ENCODE measurements at regions of chr12 and their contacts with region 1.

Region 1: GRCh38 chr12:93243689-93244513 is 133.8 kb upstream of the NUDT4 start:
- DNase-seq: peak in 6 of 9 donors; percentile 20 to 60 (median 40)
- ATAC-seq: peak; percentile 68
- H3K4me3 ChIP-seq: no peak overlapping the region
- H3K4me3 Mint-ChIP-seq: peak overlapping the region; percentile 12 to 79 (median 70)
- H3K27ac ChIP-seq: peak overlapping the region; percentile 46
- H3K27ac Mint-ChIP-seq: peak overlapping the region in 8 of 9 donors; percentile 75 to 91 (median 88)
- H3K4me1 ChIP-seq: peaks cover 11 to 23% of the 10 kb centered on the region in 2 donors
- H3K4me1 Mint-ChIP-seq: peaks cover 27 to 65% (median 56%) of the 10 kb centered on the region in 7 donors
- H3K27me3 ChIP-seq: no peaks in the 10 kb centered on the region
- H3K27me3 Mint-ChIP-seq: no peaks in the 10 kb centered on the region

Region 2: DNA sequence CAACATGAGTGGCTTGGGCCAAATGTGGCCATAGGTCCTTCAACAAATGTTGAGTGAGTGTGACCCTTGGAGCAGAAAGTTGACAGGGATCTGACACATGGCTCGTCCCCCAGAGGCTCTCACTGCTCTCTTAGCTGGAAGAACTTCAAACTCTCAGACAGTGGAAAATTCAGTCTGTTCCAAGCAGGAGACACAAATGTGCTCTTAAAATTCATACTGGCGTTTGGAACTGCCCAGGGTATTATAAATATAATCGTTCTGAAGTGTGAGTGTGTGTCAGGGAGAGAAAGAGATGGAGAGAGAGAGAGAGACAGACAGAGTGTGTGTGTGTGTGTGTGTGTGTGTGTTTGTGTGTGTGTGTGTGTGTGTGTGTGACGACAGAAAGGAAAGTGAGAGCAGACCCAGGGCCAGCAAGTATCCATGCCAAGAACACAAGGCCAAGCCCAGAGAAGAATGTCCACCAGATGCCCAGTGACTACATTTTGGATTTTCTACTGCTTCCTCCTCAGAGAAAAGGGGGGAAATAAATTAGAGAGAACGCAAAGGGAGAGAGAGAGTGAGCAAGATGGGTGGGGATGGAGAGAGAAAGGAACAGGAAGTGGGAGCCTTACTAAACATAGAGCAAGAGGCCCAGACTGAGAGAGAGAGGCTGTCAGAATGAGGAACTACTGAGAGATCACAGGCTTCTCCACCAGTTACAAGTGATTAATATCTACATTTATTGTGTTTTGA is 59.8 kb before region 1 on chr12:
- CTCF ChIA-PET with region 1: no interaction called
- POLR2A ChIA-PET with region 1: interaction called, 3 read pairs
- intact Hi-C with region 1: loop called (anchors 5 kb)
- DNase-seq: peak in 5 of 9 donors; percentile 19 to 42 (median 21)
- ATAC-seq: peak; percentile 86
- H3K4me3 ChIP-seq: no peak overlapping the region
- H3K4me3 Mint-ChIP-seq: peak overlapping the region in 9 of 10 donors; percentile 12 to 76 (median 57)
- H3K27ac ChIP-seq: no peak overlapping the region
- H3K27ac Mint-ChIP-seq: peak overlapping the region; percentile 4 to 89 (median 71)
- H3K4me1 ChIP-seq: no peaks in the 10 kb centered on the region
- H3K4me1 Mint-ChIP-seq: peaks cover 10 to 39% (median 21%) of the 10 kb centered on the region in 7 donors
- H3K27me3 ChIP-seq: no peaks in the 10 kb centered on the region
- H3K27me3 Mint-ChIP-seq: no peaks in the 10 kb centered on the region

Region 3: GRCh38 chr12:93223440-93224426 is 20.2 kb before region 1 on chr12:
- CTCF ChIA-PET with region 1: no interaction called
- POLR2A ChIA-PET with region 1: no interaction called
- intact Hi-C with region 1: no loop called
- DNase-seq: no peak
- ATAC-seq: no peak
- H3K4me3 ChIP-seq: no peak overlapping the region
- H3K4me3 Mint-ChIP-seq: no peak overlapping the region
- H3K27ac ChIP-seq: no peak overlapping the region
- H3K27ac Mint-ChIP-seq: no peak overlapping the region
- H3K4me1 ChIP-seq: no peaks in the 10 kb centered on the region
- H3K4me1 Mint-ChIP-seq: peaks cover 0 to 3% (median 0%) of the 10 kb centered on the region in 7 donors
- H3K27me3 ChIP-seq: no peaks in the 10 kb centered on the region
- H3K27me3 Mint-ChIP-seq: peaks cover 0 to 8% (median 2%) of the 10 kb centered on the region in 5 donors

Region 4: DNA sequence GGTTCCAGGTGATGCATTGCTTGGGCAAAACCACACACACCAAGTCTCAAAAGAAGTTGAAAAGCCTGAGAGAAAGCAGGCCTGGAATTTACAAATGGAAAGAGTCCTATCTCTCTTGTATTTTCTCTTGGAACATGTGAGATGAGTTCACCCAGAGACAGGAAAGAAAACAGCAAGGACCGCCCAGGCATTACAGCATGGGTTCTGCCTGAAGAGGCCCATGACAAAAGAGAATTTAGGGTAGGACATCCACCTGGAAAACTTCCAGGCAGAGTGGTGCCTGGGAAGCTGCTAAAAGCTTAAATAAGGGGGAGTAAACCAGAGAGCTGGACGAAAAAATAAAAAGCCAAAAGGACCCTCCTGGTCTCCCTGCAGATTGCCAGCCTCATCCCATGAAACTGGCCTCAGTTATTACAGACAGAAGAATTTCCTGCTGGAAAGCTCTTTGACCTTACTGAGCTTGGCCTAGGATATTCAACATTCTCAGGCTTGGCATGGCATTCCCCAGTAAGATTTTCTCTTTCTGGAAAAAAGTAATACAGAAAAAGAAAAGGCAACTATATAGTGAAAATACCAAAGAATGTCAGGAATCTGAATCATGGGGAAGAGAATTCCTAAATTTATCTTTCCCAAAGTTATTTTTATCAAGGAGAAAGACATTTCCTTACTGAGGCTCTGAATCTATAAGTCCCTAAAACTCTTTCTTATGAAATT is 12.5 kb after region 1 on chr12:
- CTCF ChIA-PET with region 1: no interaction called
- POLR2A ChIA-PET with region 1: no interaction called
- intact Hi-C with region 1: no loop called
- DNase-seq: no peak
- ATAC-seq: no peak
- H3K4me3 ChIP-seq: no peak overlapping the region
- H3K4me3 Mint-ChIP-seq: no peak overlapping the region
- H3K27ac ChIP-seq: no peak overlapping the region
- H3K27ac Mint-ChIP-seq: no peak overlapping the region
- H3K4me1 ChIP-seq: no peaks in the 10 kb centered on the region
- H3K4me1 Mint-ChIP-seq: no peaks in the 10 kb centered on the region
- H3K27me3 ChIP-seq: no peaks in the 10 kb centered on the region
- H3K27me3 Mint-ChIP-seq: no peaks in the 10 kb centered on the region

Region 5: DNA sequence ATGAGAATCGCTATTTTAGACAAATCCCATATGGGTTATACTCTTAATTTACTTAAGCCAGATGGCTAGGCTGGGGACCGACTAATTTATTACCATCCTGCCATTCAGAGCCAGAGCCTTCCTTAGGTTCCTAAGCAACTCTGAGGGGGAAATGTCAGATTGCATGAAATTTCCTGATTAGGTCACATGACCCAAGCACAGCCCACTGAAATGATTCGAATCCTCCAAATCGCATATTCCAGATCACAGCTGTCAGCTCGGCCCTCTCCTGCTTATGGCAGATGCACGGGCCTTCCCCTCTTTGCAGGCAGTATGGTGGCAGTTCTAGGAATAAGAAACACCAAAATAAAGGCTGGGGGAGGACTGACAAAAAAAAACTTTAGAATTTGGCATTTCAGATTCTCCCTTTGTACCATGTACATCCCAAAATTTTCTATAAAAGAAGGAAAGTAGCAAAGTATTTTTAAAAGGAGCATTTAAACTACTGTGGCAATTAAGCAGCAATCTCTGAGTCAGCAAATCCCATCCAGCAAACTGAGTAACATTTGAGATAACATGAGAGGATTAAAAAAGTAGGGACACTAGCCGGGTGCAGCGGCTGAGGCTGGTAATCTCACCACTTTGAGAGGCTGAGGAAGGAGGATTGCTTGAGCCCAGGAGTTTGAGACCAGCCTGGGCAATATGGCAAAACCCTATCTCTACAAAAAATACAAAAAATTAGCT is 103.3 kb after region 1 on chr12:
- CTCF ChIA-PET with region 1: no interaction called
- POLR2A ChIA-PET with region 1: no interaction called
- intact Hi-C with region 1: no loop called
- DNase-seq: no peak
- ATAC-seq: no peak
- H3K4me3 ChIP-seq: no peak overlapping the region
- H3K4me3 Mint-ChIP-seq: no peak overlapping the region
- H3K27ac ChIP-seq: no peak overlapping the region
- H3K27ac Mint-ChIP-seq: no peak overlapping the region
- H3K4me1 ChIP-seq: no peaks in the 10 kb centered on the region
- H3K4me1 Mint-ChIP-seq: peaks cover 0 to 3% (median 0%) of the 10 kb centered on the region in 7 donors
- H3K27me3 ChIP-seq: no peaks in the 10 kb centered on the region
- H3K27me3 Mint-ChIP-seq: peaks cover 0 to 6% (median 0%) of the 10 kb centered on the region in 5 donors